SK-N-SH (cell line): ENCODE measurements at regions of chr22 and their contacts with region 1.

Region 1: GRCh38 chr22:22342697-22343580 is 98.4 kb downstream of the VPREB1 start:
- DNase-seq: peak; percentile 50
- H3K4me3 ChIP-seq: no peak overlapping the region; a peak in 1 of 4 replicates
- H3K27ac ChIP-seq: no peak overlapping the region
- H3K4me1 ChIP-seq: no peaks in the 10 kb centered on the region
- H3K27me3 ChIP-seq: peaks cover 2% of the 10 kb centered on the region; the same call in 1 of the 2 replicates
- CTCF ChIP-seq: peak; percentile 87
- EP300 ChIP-seq: no peak
- RAD21 ChIP-seq: no peak; the same call in 1 of the 2 replicates

Region 2: GRCh38 chr22:22329792-22330191 is 13.1 kb before region 1 on chr22:
- CTCF ChIA-PET with region 1: interaction called, 16 read pairs
- POLR2A ChIA-PET with region 1: no interaction called
- DNase-seq: no peak
- H3K4me3 ChIP-seq: no peak overlapping the region
- H3K27ac ChIP-seq: no peak overlapping the region
- H3K4me1 ChIP-seq: no peaks in the 10 kb centered on the region
- H3K27me3 ChIP-seq: peaks cover 20% of the 10 kb centered on the region
- CTCF ChIP-seq: no peak
- EP300 ChIP-seq: no peak
- RAD21 ChIP-seq: no peak

Region 3: DNA sequence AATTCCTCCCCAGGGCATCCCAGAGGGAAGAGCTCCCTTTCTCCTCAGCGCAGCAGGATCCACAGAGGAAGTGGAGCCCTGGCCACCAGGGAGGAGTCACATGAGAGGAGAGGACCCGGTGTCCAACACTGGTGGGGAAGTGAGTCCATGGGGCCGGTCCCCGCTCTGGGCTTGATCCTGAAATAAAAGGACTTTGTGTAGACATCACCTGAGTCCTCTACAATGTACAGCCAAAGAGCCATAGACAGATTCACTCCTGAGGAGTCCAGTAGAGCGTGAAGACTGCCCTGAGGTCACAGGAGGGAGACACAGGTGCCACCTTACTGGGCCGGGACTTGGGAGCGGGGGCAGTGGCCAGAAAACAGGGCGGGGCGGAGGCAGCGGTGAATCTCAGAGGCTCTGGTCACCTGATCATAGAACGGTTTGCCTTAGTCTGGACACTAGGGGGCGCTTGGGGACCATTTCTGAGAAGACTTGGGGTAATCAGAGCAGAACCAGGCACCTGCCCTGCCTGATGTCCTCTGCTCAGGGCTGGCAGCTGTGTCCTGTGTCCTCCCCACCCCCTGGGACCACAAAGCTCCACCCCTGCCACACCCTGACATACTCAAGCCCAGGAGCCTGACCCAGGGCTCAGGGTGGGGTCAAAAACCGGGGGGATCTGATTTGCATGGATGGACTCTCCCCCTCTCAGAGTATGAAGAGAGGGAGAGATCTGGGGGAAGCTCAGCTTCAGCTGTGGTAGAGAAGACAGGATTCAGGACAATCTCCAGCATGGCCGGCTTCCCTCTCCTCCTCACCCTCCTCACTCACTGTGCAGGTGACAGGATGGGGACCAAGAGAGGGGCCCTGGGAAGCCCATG is 14.3 kb after region 1 on chr22:
- CTCF ChIA-PET with region 1: interaction called, 18 read pairs
- POLR2A ChIA-PET with region 1: no interaction called
- DNase-seq: peak; percentile 78
- H3K4me3 ChIP-seq: no peak overlapping the region
- H3K27ac ChIP-seq: no peak overlapping the region
- H3K4me1 ChIP-seq: no peaks in the 10 kb centered on the region; a peak in 1 of 4 replicates
- H3K27me3 ChIP-seq: peaks cover 27% of the 10 kb centered on the region
- CTCF ChIP-seq: peak; percentile 69
- EP300 ChIP-seq: no peak
- RAD21 ChIP-seq: peak; percentile 61

Region 4: GRCh38 chr22:22397277-22397870 is 54.4 kb after region 1 on chr22:
- CTCF ChIA-PET with region 1: interaction called, 10 read pairs
- POLR2A ChIA-PET with region 1: no interaction called
- DNase-seq: no peak
- H3K4me3 ChIP-seq: no peak overlapping the region
- H3K27ac ChIP-seq: no peak overlapping the region
- H3K4me1 ChIP-seq: peaks cover 0 to 4% of the 10 kb centered on the region in 2 experiments; a peak in 1 of 4 replicates
- H3K27me3 ChIP-seq: no peaks in the 10 kb centered on the region; the same call in 1 of the 2 replicates
- CTCF ChIP-seq: no peak; the same call in 1 of the 2 replicates
- EP300 ChIP-seq: no peak
- RAD21 ChIP-seq: no peak

Region 5: DNA sequence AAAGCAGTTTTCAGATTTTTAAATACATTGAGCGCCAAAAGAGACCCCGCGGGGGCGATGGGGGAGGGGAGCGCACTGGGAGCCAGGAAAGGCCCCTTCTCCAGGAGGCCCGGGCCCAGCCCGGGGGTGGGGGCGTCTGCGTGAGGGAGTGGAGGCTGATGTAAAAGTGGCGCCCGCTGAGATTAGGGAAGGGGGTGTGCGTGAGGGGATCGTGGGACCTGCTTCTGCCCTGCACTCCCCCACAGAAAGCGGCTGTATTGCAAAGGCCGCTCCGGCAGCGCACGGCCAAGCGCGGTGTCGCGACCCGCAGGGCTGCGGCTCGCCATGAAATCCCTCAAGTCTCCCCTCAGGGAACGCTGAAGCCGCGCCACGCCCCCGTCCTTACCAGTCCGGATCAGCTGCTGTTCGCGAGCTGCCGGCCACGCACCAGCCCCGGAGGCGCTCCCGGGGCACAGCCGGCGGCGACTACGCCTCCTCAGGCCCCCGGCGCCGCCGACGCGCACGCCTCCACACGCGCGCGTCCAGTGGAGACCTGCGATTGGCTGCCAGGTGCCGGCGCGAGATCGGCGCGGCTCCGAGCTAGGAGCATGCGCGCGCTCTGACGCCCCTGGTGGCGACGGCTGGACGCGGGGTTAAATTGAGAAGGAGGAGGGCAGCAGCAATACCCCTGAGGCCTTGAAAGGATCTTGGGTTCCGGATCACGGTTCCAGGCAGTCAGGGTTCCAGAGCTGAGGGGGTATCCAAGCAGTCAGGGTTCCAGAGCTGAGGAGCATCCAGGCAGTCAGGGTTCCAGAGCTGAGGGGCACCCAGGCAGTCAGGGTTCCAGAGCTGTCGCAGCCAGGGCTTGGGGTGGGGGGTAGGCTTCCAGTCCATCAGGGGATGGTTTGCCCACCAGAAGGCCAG is 165.6 kb after region 1 on chr22 and contains the start of gene ZNF280B:
- CTCF ChIA-PET with region 1: no interaction called
- POLR2A ChIA-PET with region 1: no interaction called
- DNase-seq: peak; percentile 94
- H3K4me3 ChIP-seq: peak within 1 kb of the TSS; percentile 76 to 82
- H3K27ac ChIP-seq: peak within 1 kb of the TSS in 1 of 2 experiments; percentile 64; a peak in 2 of 4 replicates
- H3K4me1 ChIP-seq: peaks cover 0 to 2% of the 10 kb centered on the region in 2 experiments; a peak in 1 of 4 replicates
- H3K27me3 ChIP-seq: no peaks in the 10 kb centered on the region
- CTCF ChIP-seq: peak; percentile 75
- EP300 ChIP-seq: no peak
- RAD21 ChIP-seq: no peak
- polyA plus RNA-seq, gene ZNF280B: 0.82 and 1.2 TPM in 2 replicates